SK-N-SH (cell line): ENCODE measurements at regions of chr11 and their contacts with region 1.

Region 1: DNA sequence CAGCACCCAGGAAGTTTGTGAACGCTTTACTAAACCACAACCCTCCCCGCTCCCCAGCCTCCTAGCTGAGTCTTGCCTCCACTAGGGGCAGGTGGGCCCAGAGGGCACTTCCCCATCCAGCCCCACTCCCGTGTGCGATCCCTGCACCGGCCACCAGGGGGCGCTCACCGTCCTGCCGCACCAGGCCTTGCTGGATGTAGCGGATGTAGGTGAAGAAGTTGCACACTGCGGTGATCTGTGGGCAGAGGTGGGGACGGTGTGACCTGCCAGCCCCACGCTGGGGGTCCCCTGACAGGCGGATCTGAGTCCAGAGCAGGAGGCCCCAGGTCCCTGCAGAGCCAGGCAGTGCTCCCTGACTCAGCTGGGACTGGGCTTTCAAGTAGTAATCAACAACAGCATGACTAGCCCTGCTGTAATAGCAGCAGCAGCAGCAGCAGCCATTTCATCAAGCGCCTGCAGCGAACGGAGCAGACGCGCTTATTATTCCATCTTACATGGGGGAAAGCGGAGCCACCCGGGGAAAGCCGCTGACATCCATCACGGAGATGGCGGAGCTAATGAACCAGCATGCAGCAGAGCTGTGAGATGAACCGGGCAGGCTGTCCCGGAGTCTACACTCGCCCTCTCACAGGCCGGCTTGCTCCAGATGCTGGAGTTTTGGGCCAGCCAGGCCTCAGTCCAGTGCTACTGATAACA is 7.9 kb upstream of the FADS3 start:
- DNase-seq: peak; percentile 97
- H3K4me3 ChIP-seq: peak overlapping the region in 1 of 2 experiments; percentile 44; a peak in 1 of 4 replicates
- H3K27ac ChIP-seq: no peak overlapping the region
- H3K4me1 ChIP-seq: no peaks in the 10 kb centered on the region
- H3K27me3 ChIP-seq: no peaks in the 10 kb centered on the region
- CTCF ChIP-seq: peak; percentile 98
- EP300 ChIP-seq: no peak
- RAD21 ChIP-seq: peak; percentile 89

Region 2: DNA sequence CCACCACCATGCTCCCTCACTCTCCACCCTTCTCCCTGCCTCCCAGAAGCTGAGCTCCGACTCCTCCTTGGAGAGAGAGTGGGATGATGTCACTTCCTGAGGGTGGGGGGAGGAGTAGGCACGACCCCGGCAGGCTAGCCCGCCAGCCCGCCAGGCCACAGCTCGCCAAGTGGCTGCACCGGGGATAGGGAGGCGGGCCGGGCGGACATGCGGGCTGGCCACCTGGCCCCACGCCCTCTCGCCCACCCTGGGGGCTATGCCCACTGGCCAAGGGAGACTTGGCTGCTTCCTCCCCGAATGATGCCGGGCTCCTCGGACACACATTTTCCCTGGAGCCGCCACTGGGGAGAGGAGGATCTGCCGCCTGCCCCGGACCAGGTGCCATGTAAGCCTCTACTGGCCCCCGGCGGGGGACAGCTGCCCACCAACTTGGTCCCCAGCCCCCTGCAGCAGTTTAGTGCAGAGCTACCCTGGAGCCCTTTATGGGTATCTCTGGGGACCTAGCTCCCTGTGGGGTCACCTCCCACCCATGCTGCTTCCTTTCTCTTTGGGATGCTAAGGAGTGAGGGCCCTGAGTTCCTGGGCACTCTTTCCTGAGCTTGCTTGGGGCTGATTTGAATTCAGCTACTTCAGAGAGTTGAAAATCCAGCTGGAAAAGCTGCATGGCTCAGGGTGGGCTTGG is 180.5 kb before region 1 on chr11:
- CTCF ChIA-PET with region 1: no interaction called
- POLR2A ChIA-PET with region 1: no interaction called
- DNase-seq: peak; percentile 96
- H3K4me3 ChIP-seq: peak overlapping the region; percentile 65 to 68
- H3K27ac ChIP-seq: peak overlapping the region in 1 of 2 experiments; percentile 76; a peak in 2 of 4 replicates
- H3K4me1 ChIP-seq: peaks cover 8 to 21% of the 10 kb centered on the region in 2 experiments; a peak in 2 of 4 replicates
- H3K27me3 ChIP-seq: no peaks in the 10 kb centered on the region
- CTCF ChIP-seq: no peak; the same call in 1 of the 2 replicates
- EP300 ChIP-seq: no peak; a peak in 1 of 4 replicates
- RAD21 ChIP-seq: no peak

Region 3: GRCh38 chr11:61827571-61828378 is 71.5 kb before region 1 on chr11 and contains the start of gene FADS2:
- CTCF ChIA-PET with region 1: interaction called, 10 read pairs
- POLR2A ChIA-PET with region 1: no interaction called
- DNase-seq: peak; percentile 93
- H3K4me3 ChIP-seq: peak within 1 kb of the TSS; percentile 70 to 96
- H3K27ac ChIP-seq: peak within 1 kb of the TSS; percentile 21 to 99
- H3K4me1 ChIP-seq: peaks cover 10 to 46% of the 10 kb centered on the region in 2 experiments; a peak in 3 of 4 replicates
- H3K27me3 ChIP-seq: no peaks in the 10 kb centered on the region
- CTCF ChIP-seq: no peak
- EP300 ChIP-seq: peak; percentile 16 to 32; a peak in 2 of 4 replicates
- RAD21 ChIP-seq: no peak
- polyA plus RNA-seq, gene FADS2: 67.8 and 77.1 TPM in 2 replicates

Region 4: DNA sequence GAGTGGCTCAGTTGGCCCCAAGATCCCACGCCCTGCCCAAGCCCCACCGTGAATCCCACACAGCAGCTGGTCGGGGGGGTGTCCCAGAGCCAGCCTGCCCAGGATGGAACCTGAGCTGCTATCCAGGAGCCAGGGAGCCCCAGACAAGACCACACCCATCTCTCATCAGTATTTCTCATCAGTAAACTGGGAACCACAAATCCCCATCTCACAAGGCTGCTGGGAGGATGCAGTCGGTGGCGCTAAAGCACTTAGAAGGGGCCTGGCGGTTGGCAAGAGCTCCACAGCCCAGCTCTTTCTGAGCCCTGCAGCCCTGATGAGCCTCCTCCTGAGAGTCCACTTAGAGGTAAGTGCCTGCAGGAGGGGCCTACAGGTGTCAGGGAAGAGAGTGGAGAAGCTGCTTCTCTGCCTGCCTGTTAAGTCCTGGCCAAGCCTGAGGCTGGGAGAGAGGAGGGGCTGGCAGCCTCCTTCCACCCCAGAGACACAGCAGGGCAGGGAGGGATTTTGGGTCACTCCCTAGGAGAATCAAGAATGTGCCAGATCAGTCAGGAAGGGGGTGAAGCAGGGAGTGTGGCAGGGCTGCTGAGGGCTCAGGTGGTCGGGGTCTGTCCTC is 14.0 kb before region 1 on chr11:
- CTCF ChIA-PET with region 1: interaction called, 64 read pairs
- POLR2A ChIA-PET with region 1: no interaction called
- DNase-seq: no peak
- H3K4me3 ChIP-seq: no peak overlapping the region
- H3K27ac ChIP-seq: no peak overlapping the region
- H3K4me1 ChIP-seq: peaks cover 7 to 11% of the 10 kb centered on the region in 2 experiments; a peak in 3 of 4 replicates
- H3K27me3 ChIP-seq: no peaks in the 10 kb centered on the region
- CTCF ChIP-seq: no peak
- EP300 ChIP-seq: no peak
- RAD21 ChIP-seq: no peak

Region 5: GRCh38 chr11:61928606-61929005 is 29.3 kb after region 1 on chr11:
- CTCF ChIA-PET with region 1: interaction called, 106 read pairs
- POLR2A ChIA-PET with region 1: interaction called, 3 read pairs
- DNase-seq: no peak
- H3K4me3 ChIP-seq: no peak overlapping the region
- H3K27ac ChIP-seq: no peak overlapping the region
- H3K4me1 ChIP-seq: peaks cover 4 to 8% of the 10 kb centered on the region in 2 experiments; a peak in 3 of 4 replicates
- H3K27me3 ChIP-seq: no peaks in the 10 kb centered on the region
- CTCF ChIP-seq: no peak
- EP300 ChIP-seq: no peak
- RAD21 ChIP-seq: no peak

Region 6: DNA sequence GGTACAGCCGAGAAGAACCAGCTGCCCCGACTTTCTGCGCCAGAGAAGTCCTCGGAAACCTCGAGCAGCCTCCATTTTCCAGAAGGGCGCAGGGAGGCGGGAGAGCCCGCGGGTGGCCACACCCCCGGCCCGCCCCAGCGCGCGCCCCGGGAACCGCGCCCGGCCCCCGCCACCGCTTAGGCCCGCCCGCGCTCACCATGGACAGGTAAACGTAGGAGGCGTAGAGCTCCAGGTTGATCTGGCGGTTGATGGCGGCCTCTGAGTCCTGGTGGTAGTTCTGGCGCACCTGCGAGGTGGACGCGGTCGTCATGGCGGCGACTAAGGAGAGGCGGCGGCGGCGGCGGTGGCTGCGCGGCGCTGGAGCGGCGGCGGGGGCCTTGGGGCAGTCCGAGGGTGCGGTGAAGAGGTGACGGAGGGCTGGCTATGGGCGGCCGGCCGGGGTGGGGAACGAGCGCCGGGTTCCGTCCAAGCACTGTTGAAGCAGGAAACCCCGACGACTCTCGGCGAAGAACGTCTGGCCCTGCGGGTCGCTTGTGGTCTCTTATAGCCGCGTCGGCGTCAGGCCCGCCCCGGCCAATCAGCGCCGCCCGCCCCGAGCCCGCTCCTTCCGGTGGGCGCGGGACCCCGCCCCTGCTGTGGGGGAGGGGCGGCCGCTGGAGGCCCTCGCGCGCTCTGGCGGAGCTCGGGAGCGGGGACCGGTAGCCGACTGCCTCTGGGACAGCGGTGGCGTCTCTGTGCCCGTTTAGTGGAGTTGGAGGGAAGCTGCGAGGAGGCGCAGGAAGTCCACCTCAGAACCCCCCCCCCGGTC is 68.0 kb after region 1 on chr11 and contains the start of gene FTH1:
- CTCF ChIA-PET with region 1: interaction called, 52 read pairs
- POLR2A ChIA-PET with region 1: interaction called, 11 read pairs
- DNase-seq: peak; percentile 99
- H3K4me3 ChIP-seq: peak within 1 kb of the TSS; percentile 99
- H3K27ac ChIP-seq: peak within 1 kb of the TSS; percentile 94 to 97
- H3K4me1 ChIP-seq: peaks cover 43 to 52% of the 10 kb centered on the region in 2 experiments
- H3K27me3 ChIP-seq: no peaks in the 10 kb centered on the region
- CTCF ChIP-seq: no peak
- EP300 ChIP-seq: peak; percentile 8 to 29; a peak in 2 of 4 replicates
- RAD21 ChIP-seq: no peak
- polyA plus RNA-seq, gene FTH1: 879 and 1,229 TPM in 2 replicates